Caco-2 (cell line): ENCODE measurements at regions of chr3 and their contacts with region 1.

Region 1: GRCh38 chr3:177777699-177778098 is 580.4 kb upstream of the TBL1XR1 start:
- DNase-seq: peak; percentile 66 to 67
- H3K4me3 ChIP-seq: no peak overlapping the region
- H3K4me3 Mint-ChIP-seq: no peak overlapping the region
- H3K27ac Mint-ChIP-seq: no peak overlapping the region
- H3K4me1 ChIP-seq: no peaks in the 10 kb centered on the region
- H3K4me1 Mint-ChIP-seq: no peaks in the 10 kb centered on the region
- H3K27me3 ChIP-seq: no peaks in the 10 kb centered on the region
- H3K27me3 Mint-ChIP-seq: no peaks in the 10 kb centered on the region
- CTCF ChIP-seq: peak; percentile 61 to 63

Region 2: DNA sequence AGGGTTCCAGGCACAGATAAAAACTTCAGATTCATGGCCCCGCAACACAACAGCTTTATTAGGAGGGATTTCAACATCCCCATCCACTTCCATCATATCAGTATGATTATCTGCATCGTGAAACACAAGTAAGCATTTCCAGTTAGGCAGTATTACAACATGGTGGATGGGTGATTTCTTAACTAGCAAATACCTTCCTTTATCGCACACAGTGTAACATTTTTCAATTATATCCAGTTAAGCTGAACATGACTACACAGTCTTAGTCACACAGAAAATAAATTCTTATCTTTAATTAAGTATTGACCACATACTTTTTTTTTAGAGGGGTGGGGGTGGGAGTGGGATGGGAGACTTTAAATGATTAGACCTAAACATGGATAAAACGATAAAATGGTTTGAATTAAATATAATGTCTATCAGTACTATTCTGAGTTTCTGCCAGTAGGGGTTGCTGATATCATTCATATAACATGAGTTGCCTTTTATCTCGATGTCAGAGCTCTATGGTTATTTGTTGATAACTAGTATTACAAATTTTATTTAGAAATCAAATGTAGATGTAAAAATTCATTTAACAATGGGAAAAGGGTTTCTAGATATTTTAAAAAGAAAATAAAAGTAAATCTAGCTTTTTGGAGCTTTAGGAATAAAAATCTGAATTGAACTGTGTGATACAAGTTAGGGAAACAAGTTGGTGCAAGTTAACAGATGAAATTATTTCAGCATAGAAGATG is 727.0 kb before region 1 on chr3:
- CTCF ChIA-PET with region 1: no interaction called
- POLR2A ChIA-PET with region 1: no interaction called
- intact Hi-C with region 1: loop called (anchors 2 kb)
- DNase-seq: peak in 1 of 2 experiments; percentile 17
- H3K4me3 ChIP-seq: no peak overlapping the region
- H3K4me3 Mint-ChIP-seq: no peak overlapping the region
- H3K27ac Mint-ChIP-seq: no peak overlapping the region
- H3K4me1 ChIP-seq: no peaks in the 10 kb centered on the region
- H3K4me1 Mint-ChIP-seq: peaks cover 6% of the 10 kb centered on the region
- H3K27me3 ChIP-seq: no peaks in the 10 kb centered on the region
- H3K27me3 Mint-ChIP-seq: no peaks in the 10 kb centered on the region
- CTCF ChIP-seq: peak; percentile 18 to 38

Region 3: GRCh38 chr3:177622541-177622940 is 155.2 kb before region 1 on chr3:
- CTCF ChIA-PET with region 1: interaction called, 4 read pairs
- POLR2A ChIA-PET with region 1: no interaction called
- intact Hi-C with region 1: loop called (anchors 1 kb)
- DNase-seq: peak in 1 of 2 experiments; percentile 36
- H3K4me3 ChIP-seq: no peak overlapping the region
- H3K4me3 Mint-ChIP-seq: no peak overlapping the region
- H3K27ac Mint-ChIP-seq: peak overlapping the region; percentile 25
- H3K4me1 ChIP-seq: peaks cover 21% of the 10 kb centered on the region
- H3K4me1 Mint-ChIP-seq: peaks cover 31% of the 10 kb centered on the region
- H3K27me3 ChIP-seq: no peaks in the 10 kb centered on the region
- H3K27me3 Mint-ChIP-seq: no peaks in the 10 kb centered on the region
- CTCF ChIP-seq: peak in 1 of 2 experiments; percentile 43

Region 4: GRCh38 chr3:177744873-177745606 is 32.7 kb before region 1 on chr3:
- CTCF ChIA-PET with region 1: no interaction called
- POLR2A ChIA-PET with region 1: no interaction called
- intact Hi-C with region 1: loop called (anchors 2 kb)
- DNase-seq: peak; percentile 30 to 62
- H3K4me3 ChIP-seq: no peak overlapping the region
- H3K4me3 Mint-ChIP-seq: no peak overlapping the region
- H3K27ac Mint-ChIP-seq: peak overlapping the region; percentile 19
- H3K4me1 ChIP-seq: peaks cover 23% of the 10 kb centered on the region
- H3K4me1 Mint-ChIP-seq: peaks cover 31% of the 10 kb centered on the region
- H3K27me3 ChIP-seq: no peaks in the 10 kb centered on the region
- H3K27me3 Mint-ChIP-seq: no peaks in the 10 kb centered on the region
- CTCF ChIP-seq: no peak

Region 5: GRCh38 chr3:177934001-177934891 is 156.5 kb after region 1 on chr3:
- CTCF ChIA-PET with region 1: no interaction called
- POLR2A ChIA-PET with region 1: no interaction called
- intact Hi-C with region 1: no loop called
- DNase-seq: peak; percentile 36 to 41
- H3K4me3 ChIP-seq: no peak overlapping the region
- H3K4me3 Mint-ChIP-seq: no peak overlapping the region
- H3K27ac Mint-ChIP-seq: peak overlapping the region; percentile 81
- H3K4me1 ChIP-seq: peaks cover 15% of the 10 kb centered on the region
- H3K4me1 Mint-ChIP-seq: peaks cover 19% of the 10 kb centered on the region
- H3K27me3 ChIP-seq: no peaks in the 10 kb centered on the region
- H3K27me3 Mint-ChIP-seq: no peaks in the 10 kb centered on the region
- CTCF ChIP-seq: no peak